Psoas muscle (tissue), 8 donors: ENCODE measurements at regions of chr2 and their contacts with region 1.

Region 1: GRCh38 chr2:66434679-66435548 is at the start of gene MEIS1:
- DNase-seq: peak; percentile 89 to 94
- ATAC-seq: peak; percentile 83 to 93 (median 87)
- H3K4me3 ChIP-seq: peak within 1 kb of the TSS; percentile 70
- H3K27ac ChIP-seq: peak within 1 kb of the TSS; percentile 92
- H3K4me1 ChIP-seq: no peaks in the 10 kb centered on the region
- H3K27me3 ChIP-seq: no peaks in the 10 kb centered on the region
- CTCF ChIP-seq: no peak
- total RNA-seq, gene MEIS1: 0.77 to 6.8 (median 4.0) TPM

Region 2: GRCh38 chr2:65722028-65722778 is 712.7 kb before region 1 on chr2:
- intact Hi-C with region 1: loop called in 1 of 2 experiments (anchors 10 kb)
- DNase-seq: peak; percentile 28 to 67
- ATAC-seq: peak; percentile 68 to 87 (median 78)
- H3K4me3 ChIP-seq: no peak overlapping the region
- H3K27ac ChIP-seq: no peak overlapping the region
- H3K4me1 ChIP-seq: no peaks in the 10 kb centered on the region
- H3K27me3 ChIP-seq: no peaks in the 10 kb centered on the region
- CTCF ChIP-seq: peak; percentile 45

Region 3: GRCh38 chr2:66456183-66457041 is 21.5 kb after region 1 on chr2:
- intact Hi-C with region 1: no loop called
- DNase-seq: no peak
- ATAC-seq: no peak
- H3K4me3 ChIP-seq: no peak overlapping the region
- H3K27ac ChIP-seq: no peak overlapping the region
- H3K4me1 ChIP-seq: peaks cover 2% of the 10 kb centered on the region
- H3K27me3 ChIP-seq: no peaks in the 10 kb centered on the region
- CTCF ChIP-seq: no peak

Region 4: GRCh38 chr2:66509326-66509811 is 74.5 kb after region 1 on chr2:
- intact Hi-C with region 1: loop called in 1 of 2 experiments (anchors 5 kb)
- DNase-seq: no peak
- ATAC-seq: no peak
- H3K4me3 ChIP-seq: no peak overlapping the region
- H3K27ac ChIP-seq: no peak overlapping the region
- H3K4me1 ChIP-seq: peaks cover 17% of the 10 kb centered on the region
- H3K27me3 ChIP-seq: no peaks in the 10 kb centered on the region
- CTCF ChIP-seq: no peak

Region 5: DNA sequence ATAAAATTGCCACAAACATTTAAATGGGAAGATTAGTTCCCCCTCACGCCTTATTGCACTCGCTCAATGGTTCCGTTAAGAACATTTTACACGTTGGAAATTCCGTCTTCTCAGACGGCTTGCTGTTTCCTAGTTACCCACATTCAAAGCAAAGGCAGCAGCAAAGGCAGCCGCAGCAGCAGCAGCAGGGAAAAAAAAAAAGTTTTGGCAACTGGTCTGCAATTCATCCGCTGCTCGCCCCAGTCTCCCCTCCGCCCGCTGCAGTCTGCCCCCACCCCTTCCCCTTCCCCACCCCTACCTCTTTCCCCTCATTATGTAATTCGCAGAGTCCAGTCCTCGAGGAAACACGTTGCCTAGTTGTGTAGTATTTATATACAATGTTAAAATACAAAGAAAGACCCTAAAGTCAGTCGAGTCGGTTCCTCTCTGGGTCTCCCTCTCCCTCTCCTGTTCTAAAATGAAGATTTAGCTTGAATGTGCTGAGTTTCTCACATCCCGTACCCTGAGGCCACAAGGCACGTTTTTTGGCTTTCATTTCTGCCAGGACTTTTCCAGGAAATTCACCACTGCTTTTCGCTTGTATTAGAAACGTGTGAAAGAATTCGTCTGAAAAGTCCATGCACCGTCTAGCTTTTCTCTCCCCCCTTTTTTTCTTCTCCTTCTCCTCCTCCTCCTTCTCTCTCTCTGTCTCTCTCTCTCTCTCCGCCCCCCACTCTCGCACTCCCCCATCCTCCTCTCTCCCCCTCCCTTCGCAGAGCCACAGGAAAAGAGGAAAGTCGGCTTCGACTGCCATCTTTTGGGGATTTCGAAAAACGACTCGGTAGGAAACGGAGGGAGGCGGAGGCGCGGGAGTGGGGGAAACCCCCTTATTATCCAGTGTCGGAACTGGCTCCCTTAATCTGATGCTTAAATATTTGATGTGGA is 140.0 kb after region 1 on chr2:
- intact Hi-C with region 1: loop called (anchors 5 kb)
- DNase-seq: peak; percentile 56 to 65
- ATAC-seq: peak; percentile 55 to 73 (median 64)
- H3K4me3 ChIP-seq: peak overlapping the region; percentile 66
- H3K27ac ChIP-seq: no peak overlapping the region
- H3K4me1 ChIP-seq: peaks cover 15% of the 10 kb centered on the region
- H3K27me3 ChIP-seq: peaks cover 0 to 61% (median 28%) of the 10 kb centered on the region in 3 donors
- CTCF ChIP-seq: peak; percentile 31

Region 6: DNA sequence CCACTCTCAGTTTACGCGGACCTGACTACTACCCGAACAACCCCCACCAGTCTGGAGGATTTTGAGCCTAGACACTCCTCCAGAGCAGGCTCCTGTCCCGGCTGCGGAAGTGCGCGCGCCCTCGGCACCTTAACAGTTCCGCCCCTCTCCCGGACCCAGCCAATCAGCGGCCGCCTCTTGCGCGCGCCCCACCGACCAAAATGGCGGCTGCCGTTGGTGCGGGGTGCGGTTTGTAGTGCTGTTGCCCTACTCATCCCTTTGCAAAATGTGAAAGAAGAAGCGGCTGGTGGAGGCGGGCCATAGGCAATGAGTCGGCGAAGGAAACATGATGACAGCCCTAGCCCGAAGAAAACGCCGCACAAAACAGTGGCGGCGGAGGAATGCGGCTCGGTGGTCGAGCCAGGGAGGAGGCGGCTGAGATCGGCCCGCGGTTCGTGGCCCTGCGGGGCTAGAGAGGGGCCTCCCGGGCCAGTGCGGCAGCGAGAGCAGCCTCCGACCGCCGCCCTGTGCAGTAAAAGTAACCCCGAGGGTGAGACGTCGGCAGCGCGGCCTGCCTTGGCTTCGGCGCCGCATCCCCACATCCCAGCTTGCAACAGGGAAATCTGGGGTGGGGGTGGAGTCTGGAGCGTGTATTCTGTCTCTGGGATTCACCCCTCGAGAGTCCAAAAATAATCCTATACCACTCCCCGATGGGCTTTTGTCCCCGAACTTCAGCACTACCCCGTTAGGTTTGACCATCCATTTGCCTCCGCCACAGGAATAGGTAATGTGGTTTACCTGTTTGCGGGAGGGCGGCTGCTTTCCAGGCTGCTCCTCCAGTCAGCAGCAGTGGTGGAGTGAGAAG is 962.5 kb after region 1 on chr2 and contains the start of gene ETAA1:
- intact Hi-C with region 1: loop called in 1 of 2 experiments (anchors 10 kb)
- DNase-seq: peak; percentile 94 to 96
- ATAC-seq: peak; percentile 100
- H3K4me3 ChIP-seq: peak within 1 kb of the TSS; percentile 97
- H3K27ac ChIP-seq: peak within 1 kb of the TSS; percentile 91
- H3K4me1 ChIP-seq: peaks cover 4% of the 10 kb centered on the region
- H3K27me3 ChIP-seq: no peaks in the 10 kb centered on the region
- CTCF ChIP-seq: no peak
- total RNA-seq, gene ETAA1: 2.7 to 3.6 (median 2.9) TPM

Region 7: GRCh38 chr2:67650291-67651133 is 1215.6 kb after region 1 on chr2:
- intact Hi-C with region 1: loop called (anchors 2 to 5 kb)
- DNase-seq: peak; percentile 81 to 89
- ATAC-seq: peak; percentile 82 to 92 (median 88)
- H3K4me3 ChIP-seq: no peak overlapping the region
- H3K27ac ChIP-seq: peak overlapping the region; percentile 80
- H3K4me1 ChIP-seq: peaks cover 26% of the 10 kb centered on the region
- H3K27me3 ChIP-seq: no peaks in the 10 kb centered on the region
- CTCF ChIP-seq: peak; percentile 68